H1 (cell line): ENCODE measurements at regions of chr16 and their contacts with region 1.

Region 1: DNA sequence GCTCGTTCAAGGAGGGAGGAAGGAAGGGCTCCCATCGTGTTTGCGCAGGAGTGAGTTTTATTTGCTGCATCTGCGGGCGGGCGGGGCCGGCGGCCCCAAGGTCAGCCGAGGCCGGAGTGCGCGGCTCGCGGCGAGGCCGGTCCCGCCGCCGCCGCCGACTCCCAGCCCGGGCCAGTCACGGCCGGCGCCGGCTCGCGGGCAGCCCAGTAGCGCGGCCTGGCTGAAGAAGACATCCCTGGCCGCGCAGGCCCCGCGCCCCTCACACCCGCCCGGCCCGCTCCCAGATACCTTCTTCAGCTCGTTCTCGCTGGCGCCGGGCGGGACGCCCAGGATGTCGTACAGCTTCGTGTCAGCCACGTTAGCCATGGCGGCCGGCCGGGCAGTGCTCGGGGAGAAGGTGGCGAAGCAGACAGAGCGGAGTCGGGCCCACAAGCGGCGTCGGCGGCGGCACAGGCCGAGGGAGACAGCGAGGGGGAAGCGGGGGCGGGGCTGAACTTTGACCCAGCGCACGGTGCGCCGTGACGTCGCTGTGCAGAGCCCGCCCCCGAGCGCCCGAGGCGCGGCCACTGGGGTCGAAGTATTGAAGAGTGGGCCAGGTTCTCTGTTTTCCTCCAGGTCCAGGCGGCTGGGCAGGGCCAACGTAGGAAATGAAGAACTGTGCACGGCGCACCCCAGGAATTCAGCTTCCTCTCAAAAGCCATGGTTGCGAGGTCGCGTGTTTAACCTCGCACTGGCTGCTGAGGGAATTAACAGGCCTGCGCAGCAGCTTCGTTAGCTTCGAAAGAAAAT is at the start of gene DNAJA2:
- DNase-seq: peak; percentile 65 to 95
- H3K4me3 ChIP-seq: peak within 1 kb of the TSS; percentile 84 to 97 (median 88)
- H3K27ac ChIP-seq: peak within 1 kb of the TSS; percentile 93
- H3K4me1 ChIP-seq: peaks cover 2 to 12% (median 5%) of the 10 kb centered on the region in 4 experiments; a peak in 4 of 7 replicates
- H3K27me3 ChIP-seq: no peaks in the 10 kb centered on the region
- CTCF ChIP-seq: no peak
- EP300 ChIP-seq: no peak
- POLR2A ChIP-seq: peak; percentile 78 to 92
- RAD21 ChIP-seq: no peak; a peak in 1 of 4 replicates
- total RNA-seq, gene DNAJA2: 93.8 and 97.4 TPM in 2 replicates

Region 2: DNA sequence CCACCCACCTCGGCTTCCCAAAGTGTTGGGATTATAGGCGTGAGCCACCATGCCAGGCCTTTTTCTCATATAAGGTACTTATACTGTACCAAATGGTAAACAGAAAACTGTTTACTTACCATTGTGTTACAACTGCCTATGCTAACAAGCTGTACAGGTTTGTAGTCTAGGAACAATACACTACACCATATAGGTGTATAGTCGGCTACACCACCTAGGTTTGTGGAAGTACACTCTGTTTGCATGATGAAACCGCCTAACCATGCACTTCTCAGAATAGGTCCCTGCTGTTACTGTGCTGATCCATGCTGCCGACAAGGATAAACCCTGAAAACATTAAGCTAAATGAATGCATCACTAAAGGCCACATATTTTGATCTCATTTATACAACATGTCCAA is 18.8 kb before region 1 on chr16:
- CTCF ChIA-PET with region 1: no interaction called
- POLR2A ChIA-PET with region 1: interaction called, 16 read pairs
- DNase-seq: no peak
- H3K4me3 ChIP-seq: no peak overlapping the region
- H3K27ac ChIP-seq: no peak overlapping the region
- H3K4me1 ChIP-seq: no peaks in the 10 kb centered on the region
- H3K27me3 ChIP-seq: no peaks in the 10 kb centered on the region
- CTCF ChIP-seq: no peak
- EP300 ChIP-seq: no peak
- POLR2A ChIP-seq: no peak; a peak in 1 of 3 replicates
- RAD21 ChIP-seq: no peak

Region 3: DNA sequence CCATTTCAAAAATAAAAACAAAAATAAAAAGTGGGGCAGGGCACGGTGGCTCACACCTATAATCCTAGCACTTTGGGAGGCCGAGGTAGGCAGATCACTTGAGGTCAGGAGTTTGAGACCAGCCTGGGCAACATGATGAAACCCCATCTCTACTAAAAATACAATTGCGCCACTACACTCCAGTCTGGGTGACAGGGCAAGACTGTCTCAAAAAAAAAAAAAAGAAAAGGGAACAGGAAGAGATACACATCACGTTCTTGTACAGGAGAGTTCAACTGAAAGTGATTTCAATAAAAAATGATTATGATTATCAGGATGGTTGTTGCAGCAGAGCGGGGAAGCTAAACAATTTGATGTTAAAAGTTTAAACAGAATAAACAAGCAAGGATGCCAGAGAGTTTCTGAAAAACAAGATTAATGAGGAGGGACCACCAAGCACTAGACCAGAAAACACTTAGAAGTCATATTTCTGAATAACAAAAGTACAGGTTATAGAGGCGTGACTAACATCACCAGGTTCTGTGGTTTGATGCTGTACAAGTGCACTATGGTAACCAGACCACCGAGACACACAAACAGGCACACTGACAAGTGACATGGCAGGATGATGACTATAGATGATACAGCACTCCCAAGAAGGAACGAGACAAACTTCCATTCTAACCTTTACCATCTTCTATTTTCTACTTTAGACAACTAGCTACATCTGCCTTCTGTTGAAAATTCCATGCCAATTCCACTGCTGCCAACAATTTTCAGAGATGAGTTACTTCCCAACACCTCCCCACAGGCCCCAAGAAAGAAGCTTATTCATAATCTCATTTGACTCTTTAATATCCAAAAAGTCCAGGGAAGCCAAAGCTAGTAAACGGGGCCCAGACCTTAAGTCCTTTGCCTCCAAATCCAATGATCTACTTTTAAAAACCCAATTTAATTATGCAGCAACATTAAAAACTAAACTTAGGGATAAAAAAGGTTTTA is 11.7 kb before region 1 on chr16:
- CTCF ChIA-PET with region 1: no interaction called
- POLR2A ChIA-PET with region 1: interaction called, 25 read pairs
- DNase-seq: no peak
- H3K4me3 ChIP-seq: no peak overlapping the region
- H3K27ac ChIP-seq: no peak overlapping the region
- H3K4me1 ChIP-seq: peaks cover 0 to 2% (median 0%) of the 10 kb centered on the region in 4 experiments; a peak in 2 of 7 replicates
- H3K27me3 ChIP-seq: no peaks in the 10 kb centered on the region
- CTCF ChIP-seq: no peak
- EP300 ChIP-seq: no peak
- POLR2A ChIP-seq: no peak
- RAD21 ChIP-seq: no peak

Region 4: DNA sequence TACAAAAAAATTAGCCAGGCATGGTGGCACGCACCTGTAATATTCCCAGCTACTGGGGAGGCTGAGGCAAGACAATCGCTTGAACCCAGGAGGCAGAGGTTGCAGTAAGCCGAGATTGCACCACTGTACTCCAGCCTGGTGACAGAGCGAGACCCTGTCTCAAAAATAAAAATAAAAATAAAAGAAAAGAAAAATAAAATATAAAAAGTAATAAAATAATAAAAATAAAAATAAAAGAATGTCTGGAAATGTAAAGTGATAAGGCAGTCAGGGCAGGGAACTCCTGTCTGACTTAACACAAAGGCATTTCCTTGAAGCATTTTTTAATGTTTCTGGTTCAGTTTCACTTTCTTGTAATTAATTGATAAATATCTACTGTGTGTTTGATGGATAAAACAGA is 34.8 kb after region 1 on chr16:
- CTCF ChIA-PET with region 1: no interaction called
- POLR2A ChIA-PET with region 1: interaction called, 11 read pairs
- DNase-seq: no peak
- H3K4me3 ChIP-seq: no peak overlapping the region
- H3K27ac ChIP-seq: no peak overlapping the region
- H3K4me1 ChIP-seq: no peaks in the 10 kb centered on the region
- H3K27me3 ChIP-seq: no peaks in the 10 kb centered on the region
- CTCF ChIP-seq: no peak
- EP300 ChIP-seq: no peak
- POLR2A ChIP-seq: no peak
- RAD21 ChIP-seq: no peak